A673 (cell line): ENCODE measurements at regions of chr19 and their contacts with region 1.

Region 1: GRCh38 chr19:9498183-9498902 is at the start of gene ZNF560:
- DNase-seq: peak; percentile 85
- H3K4me3 ChIP-seq: peak within 1 kb of the TSS; percentile 51
- H3K27ac ChIP-seq: peak within 1 kb of the TSS; percentile 73
- H3K4me1 ChIP-seq: no peaks in the 10 kb centered on the region
- H3K27me3 ChIP-seq: no peaks in the 10 kb centered on the region
- CTCF ChIP-seq: peak; percentile 50
- total RNA-seq, gene ZNF560: 5.7 and 8.0 TPM in 2 replicates

Region 2: DNA sequence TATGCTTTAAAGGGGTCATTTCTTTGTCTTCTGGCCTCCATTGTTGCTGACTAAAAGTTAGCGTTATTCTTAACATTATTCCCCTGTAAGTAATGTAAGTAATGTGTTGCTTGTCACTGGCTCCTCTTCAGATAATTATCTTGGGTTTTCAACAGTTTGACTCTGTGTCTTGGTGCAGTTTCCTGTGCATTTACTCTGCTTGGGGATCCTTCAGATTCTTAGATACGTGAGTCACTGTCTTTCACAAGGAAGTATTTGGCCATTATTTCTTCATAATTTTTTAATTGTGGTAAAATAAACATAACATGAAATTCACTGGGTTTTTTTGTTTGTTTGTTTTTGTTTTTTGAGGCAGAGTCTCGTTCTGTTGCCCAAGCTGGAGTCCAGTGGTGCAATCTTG is 333.1 kb before region 1 on chr19:
- CTCF ChIA-PET with region 1: interaction called, 10 read pairs
- POLR2A ChIA-PET with region 1: no interaction called
- intact Hi-C with region 1: no loop called
- DNase-seq: no peak
- H3K4me3 ChIP-seq: no peak overlapping the region
- H3K27ac ChIP-seq: no peak overlapping the region
- H3K4me1 ChIP-seq: no peaks in the 10 kb centered on the region
- H3K27me3 ChIP-seq: no peaks in the 10 kb centered on the region
- CTCF ChIP-seq: no peak

Region 3: GRCh38 chr19:9205501-9206113 is 292.7 kb before region 1 on chr19:
- CTCF ChIA-PET with region 1: no interaction called
- POLR2A ChIA-PET with region 1: no interaction called
- intact Hi-C with region 1: no loop called
- DNase-seq: peak; percentile 68
- H3K4me3 ChIP-seq: peak overlapping the region; percentile 32
- H3K27ac ChIP-seq: no peak overlapping the region
- H3K4me1 ChIP-seq: no peaks in the 10 kb centered on the region
- H3K27me3 ChIP-seq: no peaks in the 10 kb centered on the region
- CTCF ChIP-seq: peak; percentile 80

Region 4: DNA sequence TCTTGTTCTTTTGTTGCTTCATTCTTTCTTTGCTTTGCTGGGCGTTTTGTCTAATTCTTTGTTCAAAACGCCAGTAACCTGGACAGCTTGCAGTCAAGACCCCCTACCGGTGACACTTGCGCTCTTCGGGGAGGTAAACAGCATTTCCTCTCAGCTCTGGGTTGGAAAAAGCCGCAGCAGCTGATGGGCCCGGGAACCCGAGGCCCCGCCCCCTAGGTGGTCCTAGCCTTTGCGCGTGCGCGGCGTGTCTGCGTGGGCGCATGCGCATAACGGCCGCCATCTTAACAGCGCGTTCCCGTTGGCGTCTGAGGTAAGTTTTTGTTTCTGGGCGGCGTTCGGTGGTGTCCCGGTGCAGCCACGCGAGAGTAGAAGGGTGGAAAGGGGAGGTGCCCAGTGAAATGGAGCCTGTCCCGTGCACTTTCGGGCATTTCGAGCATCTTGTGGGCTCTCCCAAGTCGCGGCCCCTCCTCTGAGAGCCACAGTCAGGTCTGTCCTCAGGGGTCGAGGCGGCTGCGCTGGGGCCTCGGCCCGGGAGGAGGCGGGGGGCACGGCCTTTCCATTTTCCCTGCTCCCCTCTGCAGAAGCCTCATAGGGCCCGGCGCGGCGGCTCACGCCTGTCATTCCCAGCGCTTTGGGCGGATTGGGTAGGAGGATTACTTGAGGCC is 174.3 kb before region 1 on chr19 and contains the start of gene ZNF559:
- CTCF ChIA-PET with region 1: no interaction called
- POLR2A ChIA-PET with region 1: no interaction called
- intact Hi-C with region 1: no loop called
- DNase-seq: peak; percentile 96
- H3K4me3 ChIP-seq: peak within 1 kb of the TSS; percentile 57
- H3K27ac ChIP-seq: peak within 1 kb of the TSS; percentile 60
- H3K4me1 ChIP-seq: no peaks in the 10 kb centered on the region
- H3K27me3 ChIP-seq: no peaks in the 10 kb centered on the region
- CTCF ChIP-seq: peak; percentile 43
- total RNA-seq, gene ZNF559: 12.3 and 17.2 TPM in 2 replicates

Region 5: GRCh38 chr19:9528757-9529336 is 30.5 kb after region 1 on chr19:
- CTCF ChIA-PET with region 1: no interaction called
- POLR2A ChIA-PET with region 1: no interaction called
- intact Hi-C with region 1: no loop called
- DNase-seq: no peak
- H3K4me3 ChIP-seq: no peak overlapping the region
- H3K27ac ChIP-seq: no peak overlapping the region
- H3K4me1 ChIP-seq: no peaks in the 10 kb centered on the region
- H3K27me3 ChIP-seq: no peaks in the 10 kb centered on the region
- CTCF ChIP-seq: no peak